ENCODE measurements at regions of chr15 and their contacts with region 1.

Region 1: DNA sequence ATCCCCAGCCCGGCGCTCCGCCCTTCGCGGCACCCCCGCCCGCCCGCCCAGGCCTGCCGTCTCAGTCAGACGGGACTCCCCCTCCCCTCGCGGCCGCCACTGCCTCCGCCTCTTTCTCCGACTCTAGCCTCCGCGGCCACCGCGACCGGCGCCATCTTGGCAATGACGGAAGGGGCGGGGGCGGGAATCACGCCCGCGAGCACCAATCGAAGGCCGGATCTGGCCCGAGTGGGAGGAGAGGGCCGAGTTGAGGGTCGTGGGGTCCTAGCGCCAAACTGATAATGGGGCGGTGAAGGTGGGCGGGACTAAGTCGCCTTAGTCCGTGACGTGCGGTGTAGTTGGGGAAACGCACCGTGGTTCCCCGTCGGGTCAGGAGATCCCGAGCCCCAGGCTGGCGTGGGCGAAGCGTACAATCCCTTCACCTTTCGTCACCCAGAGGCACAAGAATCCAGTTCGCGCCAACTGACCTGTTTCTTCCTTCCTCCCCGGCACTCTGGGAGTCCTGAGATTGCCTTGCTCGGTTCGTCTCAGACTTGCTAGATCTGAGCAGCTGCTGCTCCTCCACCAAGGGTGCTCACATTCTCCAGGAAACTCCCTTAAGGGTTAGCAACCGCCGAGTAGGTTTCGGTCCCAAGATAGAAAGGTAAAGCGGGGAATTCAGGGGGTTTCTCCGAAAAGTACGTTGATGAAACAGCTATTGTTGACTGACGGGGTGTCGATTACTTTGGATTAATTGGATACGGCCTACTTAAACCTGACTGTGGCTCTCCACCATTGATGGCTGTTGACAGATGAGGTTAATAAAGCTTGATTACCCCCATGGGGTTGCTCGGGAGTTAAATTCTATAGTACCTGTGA is at the start of gene DENND4A:
- DNase-seq: peak; percentile 98
- H3K4me3 ChIP-seq: peak within 1 kb of the TSS; percentile 96
- H3K27ac ChIP-seq: peak within 1 kb of the TSS; percentile 83
- H3K4me1 ChIP-seq: peaks cover 58% of the 10 kb centered on the region
- CTCF ChIP-seq: no peak
- total RNA-seq, gene DENND4A: 42.7 and 47.9 TPM in 2 replicates

Region 2: GRCh38 chr15:65595960-65596359 is 196.4 kb before region 1 on chr15:
- CTCF ChIA-PET with region 1: no interaction called
- POLR2A ChIA-PET with region 1: no interaction called
- intact Hi-C with region 1: no loop called
- DNase-seq: peak; percentile 57
- H3K4me3 ChIP-seq: no peak overlapping the region
- H3K27ac ChIP-seq: no peak overlapping the region
- H3K4me1 ChIP-seq: no peaks in the 10 kb centered on the region
- CTCF ChIP-seq: peak; percentile 89

Region 3: GRCh38 chr15:65804252-65804931 is 12.0 kb after region 1 on chr15:
- CTCF ChIA-PET with region 1: no interaction called
- POLR2A ChIA-PET with region 1: interaction called, 18 read pairs
- intact Hi-C with region 1: no loop called
- DNase-seq: no peak
- H3K4me3 ChIP-seq: no peak overlapping the region
- H3K27ac ChIP-seq: peak overlapping the region; percentile 31
- H3K4me1 ChIP-seq: peaks cover 45% of the 10 kb centered on the region
- CTCF ChIP-seq: no peak

Region 4: GRCh38 chr15:65869127-65869953 is 77.0 kb after region 1 on chr15 and contains the start of gene RAB11A:
- CTCF ChIA-PET with region 1: no interaction called
- POLR2A ChIA-PET with region 1: interaction called, 3 read pairs
- intact Hi-C with region 1: loop called (anchors 2 kb)
- DNase-seq: peak; percentile 98
- H3K4me3 ChIP-seq: peak within 1 kb of the TSS; percentile 94
- H3K27ac ChIP-seq: peak within 1 kb of the TSS; percentile 83
- H3K4me1 ChIP-seq: peaks cover 18% of the 10 kb centered on the region
- CTCF ChIP-seq: peak; percentile 68
- total RNA-seq, gene RAB11A: 116 and 130 TPM in 2 replicates

Measured in OCI-LY7 (cell line).